IMR-90 (cell line): ENCODE measurements at regions of chrX and their contacts with region 1.

Region 1: GRCh38 chrX:85627363-85627762 is 247.9 kb upstream of the POF1B start:
- DNase-seq: peak; percentile 5
- ATAC-seq: peak; percentile 53; the same call in 1 of the 2 replicates
- H3K4me3 ChIP-seq: no peak overlapping the region
- H3K27ac ChIP-seq: no peak overlapping the region
- H3K4me1 ChIP-seq: no peaks in the 10 kb centered on the region
- H3K27me3 ChIP-seq: no peaks in the 10 kb centered on the region
- CTCF ChIP-seq: peak; percentile 46
- POLR2A ChIP-seq: no peak
- RAD21 ChIP-seq: peak; percentile 34

Region 2: GRCh38 chrX:85419293-85419692 is 208.1 kb before region 1 on chrX:
- CTCF ChIA-PET with region 1: no interaction called
- POLR2A ChIA-PET with region 1: no interaction called
- dilution Hi-C with region 1: no loop called
- in situ Hi-C with region 1: no loop called
- intact Hi-C with region 1: no loop called
- DNase-seq: no peak
- ATAC-seq: no peak
- H3K4me3 ChIP-seq: no peak overlapping the region
- H3K27ac ChIP-seq: no peak overlapping the region
- H3K4me1 ChIP-seq: no peaks in the 10 kb centered on the region
- H3K27me3 ChIP-seq: no peaks in the 10 kb centered on the region
- CTCF ChIP-seq: no peak
- POLR2A ChIP-seq: no peak
- RAD21 ChIP-seq: no peak

Region 3: DNA sequence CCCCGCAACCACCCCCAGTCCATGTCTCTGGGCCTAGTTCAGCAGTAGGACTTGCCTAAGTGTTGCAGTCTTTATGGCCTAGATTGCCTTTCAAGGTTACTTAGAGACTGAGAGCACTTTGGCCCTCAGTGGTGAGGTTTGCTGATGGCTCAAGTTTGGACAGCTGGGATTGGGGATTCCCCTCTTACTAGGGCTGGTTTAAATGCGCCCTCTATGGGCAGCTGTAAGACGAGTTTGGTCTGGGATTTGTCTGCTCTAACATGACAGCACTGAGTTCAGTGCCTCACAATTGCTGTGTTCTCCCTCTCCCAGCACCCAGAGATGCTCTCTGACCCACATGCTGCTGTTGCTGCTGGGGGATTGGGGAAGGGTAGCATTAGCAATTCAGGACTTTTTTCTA is 544.0 kb after region 1 on chrX:
- CTCF ChIA-PET with region 1: no interaction called
- POLR2A ChIA-PET with region 1: no interaction called
- dilution Hi-C with region 1: no loop called
- in situ Hi-C with region 1: loop called (anchors 25 kb)
- intact Hi-C with region 1: loop called (anchors 1 kb)
- DNase-seq: peak; percentile 64
- ATAC-seq: peak; percentile 72
- H3K4me3 ChIP-seq: no peak overlapping the region
- H3K27ac ChIP-seq: no peak overlapping the region
- H3K4me1 ChIP-seq: no peaks in the 10 kb centered on the region
- H3K27me3 ChIP-seq: no peaks in the 10 kb centered on the region
- CTCF ChIP-seq: peak; percentile 58
- POLR2A ChIP-seq: no peak
- RAD21 ChIP-seq: peak; percentile 66